ENCODE measurements at regions of chr11 and their contacts with region 1.

Region 1: GRCh38 chr11:83051760-83052671 is 19.7 kb downstream of the RAB30 start:
- DNase-seq: peak; percentile 98
- ATAC-seq: peak; percentile 83
- H3K4me3 ChIP-seq: no peak overlapping the region
- H3K27ac ChIP-seq: peak overlapping the region; percentile 91
- H3K4me1 ChIP-seq: peaks cover 23% of the 10 kb centered on the region
- H3K27me3 ChIP-seq: no peaks in the 10 kb centered on the region
- CTCF ChIP-seq: no peak
- POLR2A ChIP-seq: no peak
- RAD21 ChIP-seq: no peak

Region 2: DNA sequence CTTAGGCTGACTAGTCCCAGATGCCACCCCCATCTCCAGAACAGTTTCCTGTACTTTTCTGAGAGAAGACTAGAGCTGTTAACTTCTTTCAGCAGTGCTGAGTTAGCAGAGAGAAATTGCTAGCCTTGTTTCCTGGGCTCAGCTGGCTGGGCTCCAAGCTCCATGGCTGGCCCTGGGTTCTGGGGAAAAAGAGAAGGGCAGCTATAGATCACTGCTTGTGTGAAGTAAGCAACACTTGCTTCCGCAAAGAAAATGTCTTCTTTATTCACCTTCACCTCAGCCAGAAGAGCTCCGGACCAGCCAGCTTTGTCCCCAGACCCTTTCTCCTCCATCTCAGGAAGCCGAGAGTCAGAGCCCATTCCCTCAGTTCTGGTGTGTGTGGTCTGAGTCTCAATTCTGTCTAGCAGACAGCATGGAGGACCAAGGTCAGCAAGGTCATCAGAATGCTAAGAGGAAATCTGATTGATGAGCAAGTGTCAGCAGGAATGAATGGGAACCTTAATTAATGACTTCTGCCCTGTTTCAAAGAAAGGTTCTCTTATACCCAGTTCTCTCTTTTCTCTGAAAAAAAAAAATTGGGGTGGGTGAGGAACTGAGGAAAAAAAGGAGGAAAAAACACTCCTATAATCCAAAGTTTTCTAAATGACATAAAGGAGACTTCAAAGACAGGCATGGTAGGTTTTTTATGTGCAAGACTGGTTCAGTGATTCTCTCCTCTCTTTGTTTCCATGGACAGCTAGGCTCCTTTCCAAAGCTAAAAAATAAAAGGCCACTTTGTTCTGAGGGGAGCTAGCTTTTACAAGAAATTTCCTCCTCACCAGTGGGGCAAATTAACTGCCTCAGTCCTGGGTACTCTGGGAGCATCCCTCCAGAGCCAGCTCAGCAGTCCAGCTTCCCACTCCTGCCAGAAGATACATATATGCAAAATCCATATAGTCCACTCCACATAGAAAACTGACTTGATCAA is 254.7 kb before region 1 on chr11:
- CTCF ChIA-PET with region 1: no interaction called
- POLR2A ChIA-PET with region 1: no interaction called
- dilution Hi-C with region 1: no loop called
- in situ Hi-C with region 1: no loop called
- intact Hi-C with region 1: no loop called
- DNase-seq: no peak
- ATAC-seq: no peak
- H3K4me3 ChIP-seq: no peak overlapping the region
- H3K27ac ChIP-seq: no peak overlapping the region
- H3K4me1 ChIP-seq: no peaks in the 10 kb centered on the region
- H3K27me3 ChIP-seq: peaks cover 6% of the 10 kb centered on the region
- CTCF ChIP-seq: no peak
- POLR2A ChIP-seq: no peak
- RAD21 ChIP-seq: no peak

Region 3: DNA sequence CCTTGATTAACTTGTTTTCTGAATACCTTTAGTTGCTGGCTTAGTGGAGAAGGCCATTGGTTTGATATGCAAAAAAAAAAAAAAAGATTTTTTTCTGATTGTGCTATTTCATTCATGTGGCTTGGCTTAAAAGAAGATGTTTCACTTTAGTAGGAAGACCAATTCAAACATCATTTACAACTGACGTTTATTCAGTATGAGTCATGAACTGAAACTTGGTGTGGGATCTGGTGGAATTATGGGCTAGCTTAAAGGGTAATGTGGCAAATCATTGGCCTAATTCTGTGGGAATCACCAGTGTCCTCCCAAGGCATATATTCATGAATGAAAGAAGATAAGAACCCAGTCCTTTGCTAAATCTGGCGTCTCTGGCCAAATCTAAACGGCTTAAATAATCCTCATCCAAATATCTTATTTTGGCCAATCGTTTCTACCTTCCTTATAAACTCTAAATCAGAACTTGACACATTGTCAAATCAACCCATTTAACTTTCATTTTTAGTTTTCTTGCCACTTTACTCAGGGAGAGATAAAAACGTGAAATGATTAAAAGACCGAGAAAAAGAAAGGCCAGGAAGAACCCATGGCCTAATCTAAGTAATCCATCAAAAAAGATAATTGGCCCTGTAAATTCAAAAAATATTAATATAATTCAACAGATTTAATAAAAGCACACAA is 73.5 kb before region 1 on chr11:
- CTCF ChIA-PET with region 1: no interaction called
- POLR2A ChIA-PET with region 1: no interaction called
- dilution Hi-C with region 1: no loop called
- in situ Hi-C with region 1: no loop called
- intact Hi-C with region 1: loop called (anchors 1 kb)
- DNase-seq: peak; percentile 90
- ATAC-seq: peak; percentile 62
- H3K4me3 ChIP-seq: no peak overlapping the region
- H3K27ac ChIP-seq: no peak overlapping the region
- H3K4me1 ChIP-seq: peaks cover 3% of the 10 kb centered on the region
- H3K27me3 ChIP-seq: no peaks in the 10 kb centered on the region
- CTCF ChIP-seq: no peak
- POLR2A ChIP-seq: no peak
- RAD21 ChIP-seq: no peak

Region 4: DNA sequence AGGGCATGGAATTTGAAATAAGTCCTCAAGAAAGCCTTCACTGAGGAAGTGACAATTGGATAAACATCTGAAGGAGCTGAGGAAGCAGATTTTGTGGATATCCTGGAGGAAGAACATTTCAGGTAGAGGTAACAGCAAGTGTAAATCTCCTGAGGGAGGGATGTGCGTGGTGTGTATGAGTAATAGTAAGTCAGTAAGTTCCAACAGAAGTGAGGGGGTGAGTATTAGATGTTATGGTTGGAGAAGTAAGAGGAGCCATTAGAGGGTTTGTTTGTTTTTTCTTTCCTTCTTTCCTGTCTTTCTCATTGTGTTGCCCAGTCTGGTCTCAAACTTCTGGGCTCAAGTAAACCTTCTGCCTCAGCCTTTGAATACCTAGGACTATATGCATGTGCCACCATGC is 170.5 kb after region 1 on chr11:
- CTCF ChIA-PET with region 1: no interaction called
- POLR2A ChIA-PET with region 1: no interaction called
- dilution Hi-C with region 1: no loop called
- in situ Hi-C with region 1: no loop called
- intact Hi-C with region 1: no loop called
- DNase-seq: peak; percentile 71
- ATAC-seq: peak; percentile 75
- H3K4me3 ChIP-seq: no peak overlapping the region
- H3K27ac ChIP-seq: no peak overlapping the region
- H3K4me1 ChIP-seq: peaks cover 3% of the 10 kb centered on the region; the same call in 1 of the 2 replicates
- H3K27me3 ChIP-seq: no peaks in the 10 kb centered on the region
- CTCF ChIP-seq: no peak
- POLR2A ChIP-seq: no peak
- RAD21 ChIP-seq: no peak